Naive thymus-derived CD4-positive, alpha-beta T cell (primary cell): ENCODE measurements at regions of chr2 and their contacts with region 1.

Region 1: DNA sequence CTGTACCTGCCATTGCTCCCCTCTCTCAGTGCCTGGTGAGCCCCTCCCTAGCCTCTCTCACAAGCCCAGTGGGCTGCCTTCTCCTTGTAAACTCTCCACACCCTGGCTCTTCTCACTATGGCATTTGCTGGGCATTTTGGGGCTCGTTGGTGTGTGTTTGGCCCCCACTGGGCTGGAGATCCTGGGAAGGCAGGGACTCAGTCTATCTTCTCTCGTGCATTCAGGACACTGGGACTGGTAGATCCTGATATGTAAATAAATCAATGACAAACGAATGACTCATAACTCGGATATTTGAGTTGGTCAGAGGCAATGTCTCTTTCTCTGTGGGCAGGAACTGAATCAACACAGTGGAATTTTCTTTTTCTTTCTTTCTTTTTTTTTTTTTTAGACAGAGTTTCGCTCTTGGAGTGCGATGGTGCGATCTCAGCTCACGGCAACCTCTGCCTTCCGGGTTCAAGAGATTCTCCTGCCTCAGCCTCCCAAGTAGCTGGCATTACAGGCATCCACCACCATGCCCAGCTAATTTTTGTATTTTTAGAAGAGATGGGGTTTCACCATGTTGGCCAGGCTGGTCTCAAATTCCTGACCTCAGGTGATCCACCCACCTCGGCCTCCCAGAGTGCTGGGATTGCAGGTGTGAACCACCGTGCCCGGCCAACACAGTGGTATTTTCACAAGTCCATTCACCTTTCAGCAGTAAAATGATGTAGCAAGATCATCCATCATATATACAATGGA is 144.6 kb upstream of the SPRED2 start:
- DNase-seq: no peak
- ATAC-seq: no peak
- H3K4me3 ChIP-seq: no peak overlapping the region
- H3K4me3 Mint-ChIP-seq: no peak overlapping the region
- H3K27ac ChIP-seq: no peak overlapping the region
- H3K27ac Mint-ChIP-seq: peak overlapping the region in 1 of 9 donors; percentile 9
- H3K4me1 ChIP-seq: no peaks in the 10 kb centered on the region
- H3K4me1 Mint-ChIP-seq: peaks cover 0 to 5% (median 4%) of the 10 kb centered on the region in 7 donors
- H3K27me3 ChIP-seq: no peaks in the 10 kb centered on the region
- H3K27me3 Mint-ChIP-seq: peaks cover 5 to 16% (median 11%) of the 10 kb centered on the region in 5 donors

Region 2: DNA sequence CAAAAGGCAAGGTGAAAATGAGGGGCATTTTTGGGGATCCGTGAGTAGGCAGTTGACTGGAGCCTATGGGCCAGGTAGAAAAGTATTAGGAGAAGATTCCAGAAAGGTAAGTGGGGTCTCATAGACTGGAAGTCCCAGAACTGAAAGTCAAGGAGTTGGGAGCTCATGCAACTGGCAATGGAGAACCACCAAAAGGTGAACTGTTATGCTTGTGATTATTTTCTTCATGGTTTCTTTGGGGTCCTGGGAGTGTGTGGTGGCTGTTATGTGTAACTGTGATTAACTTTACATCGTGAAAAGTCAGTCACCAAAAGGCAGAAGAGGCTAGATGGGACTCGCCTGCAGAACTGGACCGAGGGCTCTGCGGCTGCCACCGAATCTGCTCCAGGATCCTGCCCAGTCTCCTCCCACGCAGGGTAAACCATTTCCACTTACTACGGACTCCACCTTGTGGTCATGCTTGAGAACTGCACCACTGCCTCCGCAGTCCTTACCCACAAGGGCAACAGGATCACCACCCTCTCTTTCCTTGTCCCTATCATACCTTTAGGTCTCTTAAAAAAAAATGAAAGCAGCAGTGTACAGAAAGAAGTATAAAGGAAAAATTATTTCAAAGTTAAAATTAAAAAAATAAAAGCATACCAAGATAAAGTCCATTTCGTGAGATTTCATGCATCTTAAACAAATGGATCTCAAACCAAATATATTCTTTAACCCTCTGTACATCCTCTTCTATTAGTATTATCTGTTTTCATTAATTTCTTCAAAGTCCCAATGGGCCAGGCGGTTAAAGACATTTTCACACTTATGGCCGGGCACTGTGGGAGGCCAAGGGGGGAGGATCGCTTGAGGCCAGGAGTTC is 536.4 kb before region 1 on chr2:
- CTCF ChIA-PET with region 1: no interaction called
- POLR2A ChIA-PET with region 1: no interaction called
- intact Hi-C with region 1: loop called in 1 of 2 experiments (anchors 1 kb)
- DNase-seq: peak; percentile 43 to 77 (median 68)
- ATAC-seq: peak; percentile 100
- H3K4me3 ChIP-seq: no peak overlapping the region
- H3K4me3 Mint-ChIP-seq: peak overlapping the region in 6 of 10 donors; percentile 23 to 65 (median 44)
- H3K27ac ChIP-seq: no peak overlapping the region
- H3K27ac Mint-ChIP-seq: peak overlapping the region in 1 of 9 donors; percentile 34
- H3K4me1 ChIP-seq: peaks cover 0 to 3% of the 10 kb centered on the region in 2 donors
- H3K4me1 Mint-ChIP-seq: peaks cover 0 to 24% (median 12%) of the 10 kb centered on the region in 7 donors
- H3K27me3 ChIP-seq: no peaks in the 10 kb centered on the region
- H3K27me3 Mint-ChIP-seq: peaks cover 0 to 2% (median 0%) of the 10 kb centered on the region in 5 donors

Region 3: GRCh38 chr2:65186872-65187851 is 389.9 kb before region 1 on chr2:
- CTCF ChIA-PET with region 1: interaction called, 3 read pairs
- POLR2A ChIA-PET with region 1: no interaction called
- intact Hi-C with region 1: loop called (anchors 1 kb)
- DNase-seq: peak; percentile 23 to 71 (median 57)
- ATAC-seq: peak; percentile 97
- H3K4me3 ChIP-seq: no peak overlapping the region
- H3K4me3 Mint-ChIP-seq: no peak overlapping the region
- H3K27ac ChIP-seq: no peak overlapping the region
- H3K27ac Mint-ChIP-seq: peak overlapping the region in 1 of 9 donors; percentile 3
- H3K4me1 ChIP-seq: no peaks in the 10 kb centered on the region
- H3K4me1 Mint-ChIP-seq: peaks cover 0 to 13% (median 9%) of the 10 kb centered on the region in 7 donors
- H3K27me3 ChIP-seq: peaks cover 0 to 3% of the 10 kb centered on the region in 2 donors
- H3K27me3 Mint-ChIP-seq: peaks cover 4 to 37% (median 12%) of the 10 kb centered on the region in 5 donors

Region 4: GRCh38 chr2:65264821-65265670 is 312.0 kb before region 1 on chr2:
- CTCF ChIA-PET with region 1: no interaction called
- POLR2A ChIA-PET with region 1: no interaction called
- intact Hi-C with region 1: loop called (anchors 1 kb)
- DNase-seq: peak in 6 of 9 donors; percentile 23 to 39 (median 34)
- ATAC-seq: no peak
- H3K4me3 ChIP-seq: no peak overlapping the region
- H3K4me3 Mint-ChIP-seq: no peak overlapping the region
- H3K27ac ChIP-seq: no peak overlapping the region
- H3K27ac Mint-ChIP-seq: peak overlapping the region in 5 of 9 donors; percentile 13 to 71 (median 57)
- H3K4me1 ChIP-seq: no peaks in the 10 kb centered on the region
- H3K4me1 Mint-ChIP-seq: peaks cover 8 to 28% (median 10%) of the 10 kb centered on the region in 7 donors
- H3K27me3 ChIP-seq: no peaks in the 10 kb centered on the region
- H3K27me3 Mint-ChIP-seq: no peaks in the 10 kb centered on the region

Region 5: GRCh38 chr2:65382776-65383357 is 194.2 kb before region 1 on chr2:
- CTCF ChIA-PET with region 1: no interaction called
- POLR2A ChIA-PET with region 1: no interaction called
- intact Hi-C with region 1: loop called in 1 of 2 experiments (anchors 1 kb)
- DNase-seq: peak; percentile 31 to 84 (median 67)
- ATAC-seq: peak; percentile 87
- H3K4me3 ChIP-seq: peak overlapping the region; percentile 11
- H3K4me3 Mint-ChIP-seq: peak overlapping the region; percentile 50 to 83 (median 78)
- H3K27ac ChIP-seq: peak overlapping the region; percentile 41
- H3K27ac Mint-ChIP-seq: peak overlapping the region; percentile 26 to 91 (median 57)
- H3K4me1 ChIP-seq: peaks cover 0 to 23% of the 10 kb centered on the region in 2 donors
- H3K4me1 Mint-ChIP-seq: peaks cover 18 to 41% (median 26%) of the 10 kb centered on the region in 7 donors
- H3K27me3 ChIP-seq: no peaks in the 10 kb centered on the region
- H3K27me3 Mint-ChIP-seq: no peaks in the 10 kb centered on the region

Region 6: GRCh38 chr2:65604245-65604644 is 27.2 kb after region 1 on chr2:
- CTCF ChIA-PET with region 1: no interaction called
- POLR2A ChIA-PET with region 1: no interaction called
- intact Hi-C with region 1: no loop called
- DNase-seq: no peak
- ATAC-seq: no peak
- H3K4me3 ChIP-seq: no peak overlapping the region
- H3K4me3 Mint-ChIP-seq: no peak overlapping the region
- H3K27ac ChIP-seq: no peak overlapping the region
- H3K27ac Mint-ChIP-seq: no peak overlapping the region
- H3K4me1 ChIP-seq: no peaks in the 10 kb centered on the region
- H3K4me1 Mint-ChIP-seq: peaks cover 0 to 10% (median 9%) of the 10 kb centered on the region in 7 donors
- H3K27me3 ChIP-seq: no peaks in the 10 kb centered on the region
- H3K27me3 Mint-ChIP-seq: peaks cover 0 to 4% (median under 1%) of the 10 kb centered on the region in 5 donors

Region 7: GRCh38 chr2:65630643-65631042 is 53.6 kb after region 1 on chr2:
- CTCF ChIA-PET with region 1: no interaction called
- POLR2A ChIA-PET with region 1: no interaction called
- intact Hi-C with region 1: no loop called
- DNase-seq: no peak
- ATAC-seq: peak; percentile 48
- H3K4me3 ChIP-seq: no peak overlapping the region
- H3K4me3 Mint-ChIP-seq: no peak overlapping the region
- H3K27ac ChIP-seq: no peak overlapping the region
- H3K27ac Mint-ChIP-seq: no peak overlapping the region
- H3K4me1 ChIP-seq: no peaks in the 10 kb centered on the region
- H3K4me1 Mint-ChIP-seq: no peaks in the 10 kb centered on the region
- H3K27me3 ChIP-seq: no peaks in the 10 kb centered on the region
- H3K27me3 Mint-ChIP-seq: peaks cover 18 to 27% (median 24%) of the 10 kb centered on the region in 5 donors